Activated CD4-positive, alpha-beta T cell treated with anti-CD3 and anti-CD28 coated beads for 36 hours (primary cell): ENCODE measurements at regions of chr20 and their contacts with region 1.

Region 1: GRCh38 chr20:35994994-35995453 is 26.6 kb downstream of the CNBD2 start:
- DNase-seq: peak; percentile 91
- ATAC-seq: peak; percentile 90
- H3K4me3 Mint-ChIP-seq: no peak overlapping the region
- H3K27ac Mint-ChIP-seq: no peak overlapping the region
- H3K4me1 Mint-ChIP-seq: peaks cover 4% of the 10 kb centered on the region
- H3K27me3 Mint-ChIP-seq: peaks cover 2% of the 10 kb centered on the region

Region 2: DNA sequence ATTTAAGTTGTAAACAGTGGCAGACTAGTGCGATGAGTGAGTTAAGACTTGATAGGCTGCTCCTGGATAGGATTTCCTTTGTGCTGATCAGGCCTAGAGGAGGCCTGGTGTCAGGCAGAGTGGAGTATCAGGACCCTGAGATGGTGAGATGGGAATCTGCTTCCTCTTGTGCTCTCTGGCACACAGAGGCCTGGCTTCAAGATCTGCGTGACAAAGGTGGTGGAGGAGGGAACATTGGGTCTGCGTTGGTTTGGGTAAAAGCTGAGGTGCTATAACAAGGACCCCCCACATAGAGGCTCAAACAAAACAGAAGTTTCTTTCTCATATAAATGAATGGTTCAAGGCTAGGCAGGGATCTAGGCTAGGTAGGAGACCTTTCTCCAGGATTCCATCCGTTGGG is 61.0 kb before region 1 on chr20:
- CTCF ChIA-PET with region 1: no interaction called
- POLR2A ChIA-PET with region 1: no interaction called
- intact Hi-C with region 1: no loop called
- DNase-seq: no peak
- ATAC-seq: no peak
- H3K4me3 Mint-ChIP-seq: no peak overlapping the region
- H3K27ac Mint-ChIP-seq: no peak overlapping the region
- H3K4me1 Mint-ChIP-seq: peaks cover 7% of the 10 kb centered on the region
- H3K27me3 Mint-ChIP-seq: no peaks in the 10 kb centered on the region

Region 3: DNA sequence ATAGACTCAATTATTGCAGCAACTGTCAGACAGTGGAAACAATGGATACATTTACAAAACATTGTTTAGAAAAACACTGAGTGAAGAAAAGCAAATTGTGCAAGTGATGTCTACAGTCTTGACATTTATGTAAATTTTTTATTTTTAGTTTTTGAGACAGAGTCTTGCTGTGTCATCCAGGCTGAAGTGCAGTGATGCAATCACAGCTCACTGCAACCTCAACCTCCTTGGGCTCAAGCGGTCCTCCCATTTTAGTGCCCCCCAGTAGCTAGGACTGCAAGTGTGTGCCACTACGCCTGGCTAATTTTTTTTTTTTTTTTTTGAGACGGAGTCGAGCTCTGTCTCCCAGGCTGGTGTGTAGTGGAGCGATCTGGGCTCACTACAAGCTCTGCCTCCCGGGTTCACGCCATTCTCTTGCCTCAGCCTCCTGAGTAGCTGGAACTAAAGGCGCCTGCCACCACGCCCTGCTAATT is 16.9 kb before region 1 on chr20:
- CTCF ChIA-PET with region 1: interaction called, 36 read pairs
- POLR2A ChIA-PET with region 1: no interaction called
- intact Hi-C with region 1: no loop called
- DNase-seq: no peak
- ATAC-seq: no peak
- H3K4me3 Mint-ChIP-seq: no peak overlapping the region
- H3K27ac Mint-ChIP-seq: no peak overlapping the region
- H3K4me1 Mint-ChIP-seq: no peaks in the 10 kb centered on the region
- H3K27me3 Mint-ChIP-seq: no peaks in the 10 kb centered on the region

Region 4: DNA sequence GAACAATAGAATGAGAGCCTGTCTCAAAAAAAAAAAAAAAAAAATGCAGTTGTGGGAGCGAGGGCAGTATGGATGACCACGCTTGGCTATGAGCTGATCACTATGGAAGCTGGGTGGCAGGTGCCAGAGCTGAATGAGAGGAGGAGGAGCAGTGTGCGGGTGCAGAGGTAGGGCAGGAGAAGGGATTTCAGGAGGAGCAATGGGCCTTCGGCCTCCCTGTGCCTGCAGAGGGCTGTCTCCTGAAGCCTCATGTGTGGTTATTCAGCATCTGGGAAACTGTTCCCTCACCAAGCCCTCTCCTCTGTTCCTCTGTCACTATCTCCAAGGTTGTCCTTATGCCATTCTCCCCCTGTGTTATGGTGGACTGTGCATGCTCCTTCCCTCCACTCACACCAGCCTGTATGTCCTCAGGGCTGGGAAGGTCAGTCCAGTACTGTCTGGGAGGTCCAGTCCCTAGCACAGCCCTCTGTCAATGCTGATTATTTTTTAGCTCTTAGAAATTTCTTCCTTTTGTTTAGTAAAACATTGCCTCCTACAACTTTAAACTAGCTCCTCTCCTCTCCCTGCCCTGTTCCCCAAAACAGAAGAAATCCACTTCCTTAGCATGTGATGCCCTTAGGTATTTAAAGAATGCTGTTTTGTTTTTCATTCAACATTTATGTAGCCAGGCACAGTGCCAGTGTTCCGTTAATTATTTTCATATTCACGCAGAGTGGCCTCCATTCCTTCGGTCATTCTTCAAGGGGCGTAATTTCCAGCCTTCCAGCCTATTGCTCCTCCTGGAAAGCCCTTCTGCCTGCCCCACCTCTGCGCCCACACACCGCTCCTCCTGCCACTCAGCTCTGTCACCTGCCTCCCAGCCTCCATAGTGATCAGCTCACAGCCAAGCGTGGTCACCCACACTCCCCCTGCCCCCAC is 22.3 kb after region 1 on chr20:
- CTCF ChIA-PET with region 1: interaction called, 39 read pairs
- POLR2A ChIA-PET with region 1: no interaction called
- intact Hi-C with region 1: no loop called
- DNase-seq: no peak
- ATAC-seq: no peak
- H3K4me3 Mint-ChIP-seq: no peak overlapping the region
- H3K27ac Mint-ChIP-seq: no peak overlapping the region
- H3K4me1 Mint-ChIP-seq: no peaks in the 10 kb centered on the region
- H3K27me3 Mint-ChIP-seq: no peaks in the 10 kb centered on the region

Region 5: DNA sequence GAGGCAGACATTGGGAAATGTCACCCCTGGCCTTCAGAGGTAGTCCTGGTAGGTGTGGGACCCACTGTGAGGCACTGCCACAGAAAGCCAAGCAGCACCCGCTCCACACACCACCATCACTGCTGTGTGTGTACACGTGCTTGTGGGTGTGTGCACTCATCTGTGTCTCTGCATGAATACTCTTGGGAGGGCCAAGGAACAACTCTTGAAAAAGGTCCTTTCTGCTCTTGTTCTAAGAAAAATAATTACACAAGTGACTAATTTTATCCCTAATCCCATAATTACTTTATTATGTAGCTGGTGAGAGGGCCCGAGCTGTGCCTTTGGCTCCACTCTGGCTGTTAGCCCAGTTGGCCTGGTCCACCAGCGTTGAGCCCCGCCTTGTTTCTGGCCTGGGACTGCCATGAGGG is 137.8 kb after region 1 on chr20:
- CTCF ChIA-PET with region 1: interaction called, 213 read pairs
- POLR2A ChIA-PET with region 1: no interaction called
- intact Hi-C with region 1: loop called (anchors 1 kb)
- DNase-seq: no peak
- ATAC-seq: no peak
- H3K4me3 Mint-ChIP-seq: no peak overlapping the region
- H3K27ac Mint-ChIP-seq: no peak overlapping the region
- H3K4me1 Mint-ChIP-seq: no peaks in the 10 kb centered on the region
- H3K27me3 Mint-ChIP-seq: no peaks in the 10 kb centered on the region

Region 6: DNA sequence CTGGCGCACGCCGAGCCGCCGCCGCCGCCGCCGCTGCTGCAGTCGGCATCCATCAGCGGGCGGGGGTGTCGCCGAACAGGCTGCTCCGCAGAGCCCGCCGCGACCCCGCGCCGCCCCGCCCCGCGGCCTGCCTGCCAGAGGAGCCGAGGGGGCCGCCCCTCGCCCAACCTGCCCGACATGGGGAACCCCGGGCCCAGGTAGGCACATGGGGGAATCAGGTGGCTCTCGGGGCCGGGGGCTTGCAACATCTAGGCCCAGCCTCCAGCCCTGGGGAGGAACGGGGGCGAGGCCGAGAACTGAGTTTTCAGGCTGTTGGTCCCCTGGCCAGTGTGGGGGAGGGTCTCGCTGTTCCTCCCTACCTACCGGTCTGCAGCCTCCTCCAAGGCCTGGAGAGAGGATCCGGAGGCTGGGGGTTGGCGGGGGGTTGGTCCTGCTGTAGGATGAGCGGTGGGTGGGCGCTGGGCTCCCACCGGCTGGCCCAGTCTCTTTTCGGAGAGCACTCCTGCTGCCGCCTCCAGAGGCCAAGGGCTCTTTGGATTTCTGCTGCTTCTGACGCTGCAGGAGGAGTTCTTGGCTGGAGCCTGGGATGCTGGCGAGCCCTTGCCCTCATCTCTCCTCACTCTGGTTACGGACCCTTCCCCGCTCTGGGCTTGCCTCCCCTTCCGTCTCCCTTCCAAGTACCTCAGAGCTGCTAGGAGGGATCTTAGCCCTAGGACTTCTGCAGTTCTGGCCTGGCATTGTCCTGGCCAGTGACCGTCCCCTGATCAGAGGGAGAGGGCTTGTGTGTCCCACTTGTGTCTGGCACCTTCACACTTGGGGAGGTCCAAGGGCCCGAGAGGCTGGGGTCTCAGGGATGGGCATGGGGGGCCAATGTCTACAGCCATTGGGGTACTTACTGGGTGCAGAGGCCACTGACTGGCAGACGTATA is 159.9 kb after region 1 on chr20 and contains the start of gene EPB41L1:
- CTCF ChIA-PET with region 1: interaction called, 14 read pairs
- POLR2A ChIA-PET with region 1: no interaction called
- intact Hi-C with region 1: no loop called
- DNase-seq: no peak
- ATAC-seq: no peak
- H3K4me3 Mint-ChIP-seq: peak within 1 kb of the TSS; percentile 59
- H3K27ac Mint-ChIP-seq: no peak within 1 kb of the TSS
- H3K4me1 Mint-ChIP-seq: peaks cover 8% of the 10 kb centered on the region
- H3K27me3 Mint-ChIP-seq: peaks cover 19% of the 10 kb centered on the region
- total RNA-seq, gene EPB41L1: 0.67 to 1.5 TPM

Region 7: DNA sequence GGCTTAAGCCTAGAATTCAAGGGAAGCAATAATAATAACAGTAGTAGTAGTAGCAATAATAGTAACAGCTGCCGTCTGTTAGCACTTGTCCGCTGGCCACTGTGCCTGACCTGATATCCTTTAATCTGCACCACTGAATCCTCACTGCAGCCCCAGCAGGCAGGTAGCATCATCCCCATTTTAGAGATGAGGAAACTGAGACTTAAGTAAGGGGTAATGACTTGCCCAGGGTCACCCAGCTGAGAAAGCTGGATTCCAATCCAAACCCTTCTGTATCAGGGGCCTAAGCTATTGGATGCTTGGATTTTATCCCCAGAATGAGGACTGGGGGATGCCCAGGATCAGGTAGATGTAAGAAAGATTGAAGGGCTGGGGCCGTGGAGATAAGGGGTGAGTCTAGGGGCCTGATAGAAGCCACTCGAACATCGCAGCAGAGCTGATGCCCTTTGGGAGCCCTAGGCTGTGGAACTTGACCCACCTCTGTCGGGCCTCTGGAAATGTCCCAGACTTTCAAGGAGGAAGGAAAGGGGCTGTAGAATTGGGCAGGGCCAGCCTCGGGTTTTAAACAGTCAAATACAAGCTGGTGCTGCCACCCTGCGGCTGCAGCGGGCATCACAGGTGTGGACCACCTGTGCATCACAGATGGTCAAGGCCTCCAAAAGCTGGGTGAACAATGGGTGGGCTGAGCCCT is 444.2 kb after region 1 on chr20:
- CTCF ChIA-PET with region 1: interaction called, 4 read pairs
- POLR2A ChIA-PET with region 1: no interaction called
- intact Hi-C with region 1: loop called (anchors 2 to 10 kb)
- DNase-seq: peak; percentile 81
- ATAC-seq: peak; percentile 45
- H3K4me3 Mint-ChIP-seq: no peak overlapping the region
- H3K27ac Mint-ChIP-seq: no peak overlapping the region
- H3K4me1 Mint-ChIP-seq: peaks cover 2% of the 10 kb centered on the region
- H3K27me3 Mint-ChIP-seq: no peaks in the 10 kb centered on the region